Activated CD8-positive, alpha-beta T cell treated with anti-CD3 and anti-CD28 coated beads for 36 hours (primary cell): ENCODE measurements at regions of chr13 and their contacts with region 1.

Region 1: GRCh38 chr13:46168341-46168740 is 13.6 kb downstream of the LCP1 start:
- DNase-seq: peak; percentile 74
- ATAC-seq: peak; percentile 38
- H3K4me3 Mint-ChIP-seq: peak overlapping the region; percentile 75
- H3K27ac Mint-ChIP-seq: peak overlapping the region; percentile 88
- H3K4me1 Mint-ChIP-seq: peaks cover 88% of the 10 kb centered on the region
- H3K27me3 Mint-ChIP-seq: no peaks in the 10 kb centered on the region
- CTCF ChIP-seq: no peak

Region 2: DNA sequence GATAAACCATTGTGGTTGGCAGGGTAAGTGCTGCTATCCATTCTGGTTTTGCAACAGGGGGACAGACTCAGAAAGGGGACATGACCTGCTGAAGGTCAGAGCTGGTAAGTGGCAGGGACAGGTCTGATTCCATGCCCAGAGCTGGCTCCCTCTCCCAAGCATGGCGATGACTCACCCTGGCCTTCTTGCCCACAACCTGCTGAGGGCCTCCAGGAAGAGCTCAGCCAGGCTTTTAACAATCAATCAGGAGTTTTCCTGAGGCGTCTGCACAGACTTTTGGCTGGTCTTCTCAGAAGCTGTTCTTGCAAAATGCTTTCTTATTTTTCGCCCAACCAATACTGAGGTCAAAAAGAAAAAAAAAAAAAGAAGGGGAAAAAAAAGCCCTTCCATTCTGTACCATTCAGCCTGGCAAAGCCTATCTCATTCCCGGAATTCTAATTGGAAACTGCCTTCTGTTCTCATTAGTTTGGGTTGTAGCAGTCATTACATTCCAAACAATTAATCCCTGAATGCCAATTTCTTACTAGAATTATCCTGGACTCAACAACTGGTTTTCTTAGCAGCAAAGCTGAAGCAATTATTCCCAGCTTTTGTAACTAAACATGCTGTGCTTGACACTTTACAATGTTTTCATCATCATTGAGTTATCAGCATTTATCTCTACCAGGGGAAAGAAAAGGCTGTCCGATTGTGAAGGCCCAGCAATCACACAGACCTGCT is 334.5 kb before region 1 on chr13:
- CTCF ChIA-PET with region 1: no interaction called
- POLR2A ChIA-PET with region 1: no interaction called
- intact Hi-C with region 1: no loop called
- DNase-seq: no peak
- ATAC-seq: no peak
- H3K4me3 Mint-ChIP-seq: no peak overlapping the region
- H3K27ac Mint-ChIP-seq: no peak overlapping the region
- H3K4me1 Mint-ChIP-seq: no peaks in the 10 kb centered on the region
- H3K27me3 Mint-ChIP-seq: no peaks in the 10 kb centered on the region
- CTCF ChIP-seq: no peak

Region 3: GRCh38 chr13:46149272-46150133 is 18.8 kb before region 1 on chr13:
- CTCF ChIA-PET with region 1: interaction called, 4 read pairs
- POLR2A ChIA-PET with region 1: interaction called, 15 read pairs
- intact Hi-C with region 1: no loop called
- DNase-seq: peak; percentile 66
- ATAC-seq: peak; percentile 84
- H3K4me3 Mint-ChIP-seq: no peak overlapping the region
- H3K27ac Mint-ChIP-seq: peak overlapping the region; percentile 80
- H3K4me1 Mint-ChIP-seq: peaks cover 53% of the 10 kb centered on the region
- H3K27me3 Mint-ChIP-seq: no peaks in the 10 kb centered on the region
- CTCF ChIP-seq: no peak

Region 4: DNA sequence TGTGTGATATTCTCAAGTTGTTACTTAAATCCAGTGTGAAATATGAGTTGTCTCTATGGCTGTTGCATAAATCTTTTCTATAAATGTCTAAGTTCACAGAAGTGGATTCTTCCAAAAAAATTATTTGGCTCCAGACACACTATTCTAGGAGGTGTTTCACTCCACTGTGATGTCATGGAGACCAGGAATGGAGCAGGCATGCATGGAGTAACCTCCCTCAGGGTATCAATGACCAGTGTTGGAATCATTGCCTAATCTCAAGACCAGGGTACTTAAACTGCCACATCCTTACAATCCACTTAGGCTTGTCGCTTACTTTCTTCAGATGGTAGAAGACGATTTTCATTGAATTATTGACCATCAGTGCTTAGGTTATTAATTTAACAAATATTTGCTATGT is 98.8 kb after region 1 on chr13:
- CTCF ChIA-PET with region 1: no interaction called
- POLR2A ChIA-PET with region 1: no interaction called
- intact Hi-C with region 1: no loop called
- DNase-seq: no peak
- ATAC-seq: no peak
- H3K4me3 Mint-ChIP-seq: no peak overlapping the region
- H3K27ac Mint-ChIP-seq: no peak overlapping the region
- H3K4me1 Mint-ChIP-seq: no peaks in the 10 kb centered on the region
- H3K27me3 Mint-ChIP-seq: peaks cover 4% of the 10 kb centered on the region
- CTCF ChIP-seq: no peak

Region 5: DNA sequence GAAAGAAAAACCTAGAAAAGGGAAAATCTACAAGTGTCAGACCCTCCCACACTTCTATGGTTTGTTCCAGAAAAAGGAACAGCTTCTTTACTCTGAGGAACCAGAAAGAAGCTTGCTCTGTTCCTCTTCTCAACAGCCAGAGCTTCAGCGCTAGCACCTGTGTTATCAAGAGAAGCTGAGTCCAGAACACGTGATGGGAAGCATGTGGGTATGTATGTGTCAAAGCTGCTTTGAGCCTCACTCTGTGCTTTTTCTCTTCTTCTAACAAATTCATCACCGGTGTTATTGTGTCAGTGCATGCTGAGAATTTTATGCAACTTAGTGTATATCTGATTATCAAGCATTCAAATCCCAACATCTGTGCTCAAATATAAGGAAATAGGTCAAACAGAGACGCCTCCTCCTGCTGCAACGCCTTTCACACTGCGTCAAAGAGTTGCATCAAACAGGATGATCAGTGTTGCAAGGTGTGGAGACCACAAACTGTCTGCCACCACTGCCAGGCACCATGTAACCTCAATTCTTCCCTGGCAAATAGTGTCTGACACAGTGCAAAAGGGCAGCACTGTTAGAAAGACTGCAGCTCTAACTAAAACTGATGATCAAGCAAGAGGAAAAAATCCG is 127.3 kb after region 1 on chr13:
- CTCF ChIA-PET with region 1: interaction called, 6 read pairs
- POLR2A ChIA-PET with region 1: interaction called, 5 read pairs
- intact Hi-C with region 1: loop called (anchors 5 kb)
- DNase-seq: peak; percentile 81
- ATAC-seq: peak; percentile 86
- H3K4me3 Mint-ChIP-seq: peak overlapping the region; percentile 52
- H3K27ac Mint-ChIP-seq: peak overlapping the region; percentile 94
- H3K4me1 Mint-ChIP-seq: peaks cover 43% of the 10 kb centered on the region
- H3K27me3 Mint-ChIP-seq: no peaks in the 10 kb centered on the region
- CTCF ChIP-seq: no peak